MCF 10A (cell line): ENCODE measurements at regions of chr11 and their contacts with region 1.

Region 1: GRCh38 chr11:12043959-12044819 is 35.8 kb upstream of the DKK3 start:
- DNase-seq: peak; percentile 94
- H3K4me3 Mint-ChIP-seq: peak overlapping the region; percentile 21
- H3K27ac Mint-ChIP-seq: peak overlapping the region; percentile 29
- H3K4me1 Mint-ChIP-seq: peaks cover 45% of the 10 kb centered on the region
- H3K27me3 Mint-ChIP-seq: no peaks in the 10 kb centered on the region
- CTCF ChIP-seq: peak; percentile 94

Region 2: GRCh38 chr11:11717064-11717725 is 327.0 kb before region 1 on chr11:
- CTCF ChIA-PET with region 1: no interaction called
- POLR2A ChIA-PET with region 1: no interaction called
- intact Hi-C with region 1: loop called (anchors 5 kb)
- DNase-seq: peak; percentile 97
- H3K4me3 Mint-ChIP-seq: peak overlapping the region; percentile 63
- H3K27ac Mint-ChIP-seq: peak overlapping the region; percentile 89
- H3K4me1 Mint-ChIP-seq: peaks cover 12% of the 10 kb centered on the region
- H3K27me3 Mint-ChIP-seq: no peaks in the 10 kb centered on the region
- CTCF ChIP-seq: no peak

Region 3: DNA sequence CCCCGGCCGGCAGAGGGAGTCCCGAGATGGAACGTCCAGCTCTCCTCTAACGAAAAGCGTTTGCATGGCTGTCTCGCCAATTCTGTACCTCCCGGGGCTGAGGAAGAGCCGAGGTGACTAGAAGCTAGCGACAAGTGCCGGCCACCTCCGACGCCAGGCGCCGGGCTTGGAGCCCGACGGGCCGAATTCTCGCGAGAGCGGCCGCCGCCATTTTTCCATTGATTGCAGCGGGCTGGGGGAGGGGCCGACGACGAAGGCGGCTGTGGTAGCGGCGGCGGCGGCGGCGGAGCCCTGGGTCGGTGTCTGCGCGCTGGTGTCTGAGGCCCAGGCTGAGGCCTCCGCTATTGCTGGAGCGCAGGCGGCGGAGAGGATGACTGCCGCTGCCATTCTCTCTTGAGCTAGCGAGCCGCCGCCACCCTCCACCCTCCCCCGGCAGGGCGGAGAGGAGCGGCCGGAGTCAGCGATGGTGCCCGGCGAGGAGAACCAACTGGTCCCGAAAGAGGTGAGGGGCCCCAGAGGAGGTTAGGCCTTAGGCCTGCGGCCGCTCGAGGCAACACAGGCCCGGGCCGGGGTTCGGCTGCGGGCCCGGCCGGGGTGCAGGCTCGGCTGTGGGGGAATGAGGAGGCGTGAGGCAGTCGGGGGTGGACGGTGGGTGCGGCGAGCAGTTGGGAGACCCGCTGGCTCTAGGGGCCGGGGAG is 202.3 kb before region 1 on chr11 and contains the start of gene USP47:
- CTCF ChIA-PET with region 1: interaction called, 3 read pairs
- POLR2A ChIA-PET with region 1: interaction called, 5 read pairs
- intact Hi-C with region 1: loop called (anchors 5 kb)
- DNase-seq: peak; percentile 87
- H3K4me3 Mint-ChIP-seq: no peak within 1 kb of the TSS
- H3K27ac Mint-ChIP-seq: no peak within 1 kb of the TSS
- H3K4me1 Mint-ChIP-seq: no peaks in the 10 kb centered on the region
- H3K27me3 Mint-ChIP-seq: no peaks in the 10 kb centered on the region
- CTCF ChIP-seq: peak; percentile 58
- total RNA-seq, gene USP47: 41.6 and 46.1 TPM in 2 replicates

Region 4: DNA sequence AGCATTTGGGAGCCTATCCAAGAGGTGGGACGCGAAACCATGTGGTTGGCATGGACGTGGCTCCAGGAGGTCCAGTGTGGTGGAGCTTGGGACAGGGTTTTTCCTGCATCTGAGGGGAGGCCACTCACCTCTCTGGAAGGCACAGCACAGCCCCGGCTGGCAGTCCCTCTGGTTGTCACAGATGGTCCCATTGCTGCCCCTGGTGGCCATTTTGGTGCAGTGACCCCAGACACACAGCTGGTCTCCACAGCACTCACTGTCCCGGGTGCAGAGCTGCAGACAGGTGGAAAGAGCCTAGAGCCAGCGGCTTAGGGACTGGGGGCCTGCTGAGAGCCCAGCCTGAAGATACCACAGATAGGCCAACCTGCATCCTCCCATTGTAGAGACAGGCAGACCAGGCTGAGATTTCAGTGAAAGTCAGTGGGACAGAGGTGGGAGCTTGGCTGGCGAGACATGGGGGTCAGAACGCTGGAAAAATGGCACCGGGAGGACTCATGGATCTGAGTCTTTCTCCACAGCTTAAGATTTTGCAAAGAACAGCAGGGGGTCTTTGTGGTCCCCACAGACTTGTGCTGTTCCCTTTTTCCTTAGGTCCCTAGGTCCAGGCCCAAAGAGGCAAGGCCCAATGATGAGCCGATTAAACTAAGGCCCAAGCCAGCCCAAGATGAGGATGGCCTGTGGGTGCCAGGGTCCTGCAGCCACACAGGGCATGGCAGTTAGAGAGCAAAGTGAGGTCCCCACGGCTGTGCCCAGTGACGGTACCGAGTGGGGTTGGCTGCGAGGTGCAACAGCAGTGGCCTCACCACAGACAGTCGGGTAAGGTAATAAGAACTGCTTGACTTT is 77.1 kb before region 1 on chr11:
- CTCF ChIA-PET with region 1: interaction called, 4 read pairs
- POLR2A ChIA-PET with region 1: no interaction called
- intact Hi-C with region 1: loop called (anchors 1 kb)
- DNase-seq: peak; percentile 75
- H3K4me3 Mint-ChIP-seq: no peak overlapping the region
- H3K27ac Mint-ChIP-seq: no peak overlapping the region
- H3K4me1 Mint-ChIP-seq: peaks cover 5% of the 10 kb centered on the region
- H3K27me3 Mint-ChIP-seq: no peaks in the 10 kb centered on the region
- CTCF ChIP-seq: peak; percentile 79

Region 5: DNA sequence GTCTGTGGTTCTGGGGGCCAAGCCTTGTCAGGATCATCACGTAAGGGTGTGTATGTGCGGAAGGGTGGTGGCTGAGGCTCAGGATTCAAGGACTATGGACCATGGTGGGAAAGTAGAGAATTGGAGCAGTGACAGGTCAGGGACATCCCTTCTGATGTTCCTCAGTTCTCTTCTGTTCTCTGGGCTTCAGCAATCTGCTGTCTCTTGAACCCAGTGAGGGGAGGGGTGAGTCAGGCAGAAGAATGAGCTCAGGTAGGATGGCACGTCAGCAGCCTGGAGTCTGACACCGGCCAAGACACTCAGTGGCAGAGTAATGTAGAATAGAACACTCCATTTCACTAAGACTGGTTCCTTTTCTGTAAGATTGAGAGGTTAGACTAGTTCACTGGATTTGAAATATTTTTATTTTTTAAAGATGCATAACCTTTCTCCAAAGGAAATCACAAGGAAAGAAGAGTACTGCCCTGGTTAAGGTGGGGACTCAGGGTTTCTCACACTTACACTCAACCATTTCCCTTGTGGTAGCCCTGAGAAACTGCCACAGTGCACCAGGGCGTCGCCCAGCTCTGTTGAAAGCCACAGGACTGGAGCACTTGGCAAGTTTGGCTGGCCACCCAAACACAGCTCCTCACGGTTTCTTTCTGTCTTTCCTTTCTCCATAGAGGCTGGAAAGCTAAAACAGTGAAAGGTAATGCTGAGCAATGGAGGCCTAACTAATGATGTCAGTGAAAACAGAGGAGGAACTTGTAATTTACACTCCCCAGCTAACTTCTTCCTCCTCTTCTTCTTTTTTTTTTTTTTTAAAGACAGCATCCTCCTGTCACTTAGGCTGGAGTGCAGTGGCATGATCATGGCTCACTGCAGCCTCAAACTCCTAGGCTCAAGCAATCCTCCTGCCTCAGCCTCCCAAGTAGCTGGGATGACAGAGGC is 43.2 kb after region 1 on chr11:
- CTCF ChIA-PET with region 1: interaction called, 61 read pairs
- POLR2A ChIA-PET with region 1: interaction called, 3 read pairs
- intact Hi-C with region 1: loop called (anchors 5 kb)
- DNase-seq: peak; percentile 70
- H3K4me3 Mint-ChIP-seq: peak overlapping the region; percentile 8
- H3K27ac Mint-ChIP-seq: peak overlapping the region; percentile 37
- H3K4me1 Mint-ChIP-seq: peaks cover 45% of the 10 kb centered on the region
- H3K27me3 Mint-ChIP-seq: no peaks in the 10 kb centered on the region
- CTCF ChIP-seq: peak; percentile 11

Region 6: GRCh38 chr11:12159351-12160099 is 115.3 kb after region 1 on chr11:
- CTCF ChIA-PET with region 1: interaction called, 13 read pairs
- POLR2A ChIA-PET with region 1: no interaction called
- intact Hi-C with region 1: no loop called
- DNase-seq: peak; percentile 81
- H3K4me3 Mint-ChIP-seq: no peak overlapping the region
- H3K27ac Mint-ChIP-seq: peak overlapping the region; percentile 85
- H3K4me1 Mint-ChIP-seq: peaks cover 30% of the 10 kb centered on the region
- H3K27me3 Mint-ChIP-seq: no peaks in the 10 kb centered on the region
- CTCF ChIP-seq: no peak

Region 7: DNA sequence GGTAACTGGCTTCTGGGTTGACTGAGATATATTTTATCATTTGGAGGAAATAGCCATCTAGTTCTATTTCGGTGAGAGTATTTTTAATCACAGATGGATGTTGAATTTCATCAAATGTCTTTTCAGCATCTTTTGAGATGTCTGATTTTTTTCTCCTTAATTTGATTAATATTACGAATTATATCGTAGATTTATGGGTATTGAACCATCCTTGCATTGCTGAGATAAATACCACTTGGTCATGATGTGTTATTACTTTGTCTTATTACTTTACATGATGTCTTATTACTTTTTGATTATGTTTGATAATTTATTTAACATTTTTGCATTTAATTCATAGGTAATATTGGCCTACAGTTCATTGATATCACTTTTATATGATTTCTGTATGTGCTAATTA is 254.4 kb after region 1 on chr11:
- CTCF ChIA-PET with region 1: no interaction called
- POLR2A ChIA-PET with region 1: no interaction called
- intact Hi-C with region 1: no loop called
- DNase-seq: no peak
- H3K4me3 Mint-ChIP-seq: no peak overlapping the region
- H3K27ac Mint-ChIP-seq: no peak overlapping the region
- H3K4me1 Mint-ChIP-seq: no peaks in the 10 kb centered on the region
- H3K27me3 Mint-ChIP-seq: no peaks in the 10 kb centered on the region
- CTCF ChIP-seq: no peak

Region 8: DNA sequence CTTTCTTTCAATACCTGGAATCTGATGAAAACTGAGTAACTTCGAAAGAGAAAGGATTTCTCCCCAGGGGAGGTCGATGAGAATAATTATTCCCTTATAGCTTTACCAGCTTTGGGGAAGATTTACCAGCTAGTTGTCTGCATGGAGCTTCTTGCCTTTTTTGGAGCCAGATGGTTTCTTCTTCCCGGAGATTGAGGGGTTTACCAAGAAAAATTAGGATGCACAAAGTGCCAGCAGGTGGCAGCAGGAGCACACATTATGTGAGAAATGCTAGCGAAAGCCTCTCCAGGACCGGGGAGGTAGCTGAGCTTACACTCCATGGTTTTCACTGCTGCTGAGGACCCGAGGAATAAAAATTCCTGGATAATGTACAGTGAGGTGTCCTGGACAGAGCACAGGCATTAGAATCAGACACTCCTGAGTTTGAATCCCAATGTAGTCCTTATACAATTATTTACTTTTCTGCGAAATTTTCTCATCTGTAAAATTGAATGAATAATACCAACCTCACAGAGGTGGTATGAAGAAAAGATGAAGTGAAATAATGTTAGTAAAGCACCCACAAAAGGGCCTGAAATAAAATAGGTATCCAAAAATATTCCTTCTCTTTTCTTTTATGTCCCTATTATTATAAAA is 287.2 kb after region 1 on chr11:
- CTCF ChIA-PET with region 1: no interaction called
- POLR2A ChIA-PET with region 1: no interaction called
- intact Hi-C with region 1: loop called (anchors 1 kb)
- DNase-seq: peak; percentile 90
- H3K4me3 Mint-ChIP-seq: no peak overlapping the region
- H3K27ac Mint-ChIP-seq: no peak overlapping the region
- H3K4me1 Mint-ChIP-seq: peaks cover 4% of the 10 kb centered on the region
- H3K27me3 Mint-ChIP-seq: no peaks in the 10 kb centered on the region
- CTCF ChIP-seq: peak; percentile 89